ENCODE measurements at regions of chr6 and their contacts with region 1.

Region 1: DNA sequence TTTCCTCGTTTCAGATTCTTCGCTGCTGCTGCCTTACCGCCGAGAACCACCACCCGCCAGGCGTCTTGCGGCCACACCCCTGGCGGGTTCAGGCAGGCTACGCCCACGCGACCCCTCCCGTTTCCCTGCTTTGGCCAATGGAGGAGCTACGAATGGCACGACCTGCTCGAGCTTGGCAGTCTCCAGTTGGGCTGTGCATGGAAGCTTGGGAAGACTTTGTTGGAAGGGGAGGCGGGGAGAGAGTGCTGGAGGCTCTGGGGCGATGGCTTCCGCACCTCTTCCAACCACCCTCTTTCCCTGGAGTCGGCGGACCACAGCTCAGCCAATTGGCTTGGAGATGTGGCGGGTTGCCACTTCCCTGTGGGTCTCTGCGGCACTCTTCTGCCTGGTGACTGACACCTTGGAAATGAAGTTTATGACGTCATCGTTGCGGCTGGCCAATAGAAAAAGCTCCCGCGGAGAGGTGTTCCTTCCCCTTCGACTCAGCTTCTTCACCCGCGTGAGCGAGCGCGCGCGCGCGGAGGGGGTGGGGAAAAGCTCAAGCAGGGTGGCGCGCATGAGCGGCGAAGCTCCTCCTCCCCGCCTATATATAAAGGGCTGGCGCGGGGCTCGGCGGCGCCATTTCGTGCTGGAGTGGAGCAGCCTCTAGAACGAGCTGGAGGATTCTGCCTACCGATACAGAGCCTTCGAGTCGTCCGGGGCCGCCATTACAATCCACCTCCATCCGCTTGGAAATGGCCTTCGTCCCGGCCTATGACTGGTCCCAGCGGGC is 3.4 kb downstream of the BRD2 start:
- DNase-seq: peak; percentile 98
- ATAC-seq: peak; percentile 43
- H3K4me3 ChIP-seq: peak overlapping the region; percentile 90 to 98 (median 95)
- H3K27ac ChIP-seq: peak overlapping the region; percentile 99
- H3K4me1 ChIP-seq: peaks cover 47% of the 10 kb centered on the region
- H3K27me3 ChIP-seq: peaks cover 0 to 4% of the 10 kb centered on the region in 2 experiments; a peak in 1 of 5 replicates
- CTCF ChIP-seq: 0 out of 2 replicates have a peak, but pooled peaks have one; percentile 17
- EP300 ChIP-seq: peak; percentile 17 to 45; a peak in 2 of 4 replicates
- POLR2A ChIP-seq: peak in 1 of 2 experiments; percentile 100; a peak in 2 of 4 replicates
- RAD21 ChIP-seq: peak; percentile 62

Region 2: DNA sequence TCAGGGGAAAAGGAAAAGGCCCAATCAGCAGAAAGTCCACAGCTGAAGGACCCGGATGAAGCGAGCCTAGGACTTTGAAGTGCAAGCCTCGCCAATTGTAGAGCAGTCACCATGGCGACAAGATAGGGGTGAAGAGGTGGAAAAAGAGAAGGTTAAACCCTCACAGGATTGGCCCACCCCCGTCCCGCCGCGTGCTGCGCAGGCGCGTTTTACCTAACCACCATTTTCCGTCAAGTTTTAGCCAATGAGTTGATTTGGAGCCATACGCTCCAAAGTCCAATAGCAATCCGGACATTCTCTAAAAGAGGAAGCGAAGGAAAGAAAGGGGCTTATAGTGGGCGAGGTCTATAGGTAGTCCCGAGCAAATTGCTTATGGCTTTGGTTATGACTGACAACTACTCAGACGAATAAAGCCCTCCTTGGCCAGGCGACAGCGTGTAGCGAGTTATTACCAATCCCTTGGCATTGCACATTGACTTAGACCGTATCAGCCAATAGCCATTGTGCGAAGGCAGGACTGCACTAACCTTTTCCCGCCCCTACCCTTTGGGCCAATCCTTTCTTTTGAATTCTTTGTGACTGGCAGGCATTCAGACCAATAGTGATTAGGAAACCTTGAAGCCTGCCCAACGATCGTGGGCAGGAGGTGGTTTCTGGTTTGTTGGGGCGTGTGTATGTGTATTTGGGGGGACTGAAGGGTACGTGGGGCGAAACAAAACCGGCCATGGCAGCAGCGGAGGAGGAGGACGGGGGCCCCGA is 793.8 kb before region 1 on chr6 and contains the start of gene RNF5:
- CTCF ChIA-PET with region 1: no interaction called
- POLR2A ChIA-PET with region 1: interaction called, 14 read pairs
- in situ Hi-C with region 1: no loop called
- intact Hi-C with region 1: no loop called
- DNase-seq: peak; percentile 100
- ATAC-seq: peak; percentile 90
- H3K4me3 ChIP-seq: peak within 1 kb of the TSS; percentile 96 to 98 (median 98)
- H3K27ac ChIP-seq: peak within 1 kb of the TSS; percentile 97
- H3K4me1 ChIP-seq: peaks cover 54% of the 10 kb centered on the region
- H3K27me3 ChIP-seq: no peaks in the 10 kb centered on the region; a peak in 1 of 5 replicates
- CTCF ChIP-seq: no peak
- EP300 ChIP-seq: peak; percentile 10 to 17; a peak in 1 of 4 replicates
- POLR2A ChIP-seq: peak; percentile 1 to 14; a peak in 1 of 4 replicates
- RAD21 ChIP-seq: no peak
- total RNA-seq, gene RNF5: 98.0 and 107 TPM in 2 replicates

Region 3: DNA sequence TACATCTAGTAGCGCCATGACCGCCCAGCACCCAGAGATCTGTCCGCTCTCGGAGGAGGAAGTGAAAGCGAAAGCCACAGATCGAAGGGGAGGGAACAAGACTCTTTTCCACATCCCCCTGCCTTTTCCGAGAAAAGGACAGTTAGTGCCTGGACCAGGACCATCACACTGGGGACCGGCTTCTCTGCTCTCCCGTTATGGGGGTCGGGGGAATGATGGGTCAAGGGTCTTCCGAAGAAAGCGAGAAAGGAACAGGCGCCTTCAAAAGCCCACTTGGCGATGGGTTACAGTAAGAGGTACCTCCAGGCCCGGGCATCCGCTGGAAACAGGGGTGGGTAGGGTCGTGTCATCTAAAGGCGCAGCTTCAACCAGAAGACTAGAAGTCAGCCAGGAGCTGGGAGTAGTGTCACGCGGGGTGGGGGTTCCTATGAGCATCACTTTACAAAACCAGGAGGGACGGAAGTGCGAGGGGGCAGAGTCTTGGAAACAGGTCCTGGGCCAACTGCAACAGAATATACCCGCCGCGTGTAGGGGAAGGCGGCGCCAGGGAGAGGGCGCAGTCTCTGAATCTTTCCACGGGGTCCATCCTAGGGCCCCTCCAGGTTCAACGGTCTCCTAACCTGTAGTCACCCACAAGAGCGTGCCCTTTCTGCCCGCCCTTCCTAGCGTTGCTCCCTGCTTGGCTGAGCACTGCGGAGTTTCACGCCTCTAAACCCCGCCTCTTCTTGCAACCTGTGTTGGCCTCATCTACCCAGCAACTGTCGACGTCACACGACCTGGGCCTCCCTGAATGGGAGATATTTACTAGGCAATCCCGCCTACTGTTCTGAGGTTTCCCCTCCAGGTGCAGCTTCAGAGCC is 127.6 kb before region 1 on chr6 and contains the start of gene PSMB8:
- CTCF ChIA-PET with region 1: no interaction called
- POLR2A ChIA-PET with region 1: interaction called, 56 read pairs
- in situ Hi-C with region 1: no loop called
- intact Hi-C with region 1: no loop called
- DNase-seq: peak; percentile 96
- ATAC-seq: peak; percentile 97
- H3K4me3 ChIP-seq: peak within 1 kb of the TSS; percentile 73 to 85 (median 75)
- H3K27ac ChIP-seq: peak within 1 kb of the TSS; percentile 20
- H3K4me1 ChIP-seq: peaks cover 16% of the 10 kb centered on the region
- H3K27me3 ChIP-seq: no peaks in the 10 kb centered on the region; a peak in 1 of 5 replicates
- CTCF ChIP-seq: peak; percentile 37
- EP300 ChIP-seq: no peak
- POLR2A ChIP-seq: peak; percentile 57 to 61
- RAD21 ChIP-seq: no peak
- total RNA-seq, gene PSMB8: 64.7 and 74.9 TPM in 2 replicates

Region 4: GRCh38 chr6:32933636-32934085 is 38.1 kb before region 1 on chr6:
- CTCF ChIA-PET with region 1: interaction called, 12 read pairs
- POLR2A ChIA-PET with region 1: interaction called, 7 read pairs
- in situ Hi-C with region 1: no loop called
- intact Hi-C with region 1: no loop called
- DNase-seq: peak; percentile 67
- ATAC-seq: peak; percentile 65
- H3K4me3 ChIP-seq: no peak overlapping the region
- H3K27ac ChIP-seq: no peak overlapping the region
- H3K4me1 ChIP-seq: peaks cover 16% of the 10 kb centered on the region
- H3K27me3 ChIP-seq: peaks cover 2 to 28% of the 10 kb centered on the region in 2 experiments; a peak in 3 of 5 replicates
- CTCF ChIP-seq: peak; percentile 85
- EP300 ChIP-seq: no peak
- POLR2A ChIP-seq: no peak
- RAD21 ChIP-seq: peak; percentile 69

Region 5: GRCh38 chr6:33091957-33092356 is 120.2 kb after region 1 on chr6:
- CTCF ChIA-PET with region 1: no interaction called
- POLR2A ChIA-PET with region 1: no interaction called
- in situ Hi-C with region 1: no loop called
- intact Hi-C with region 1: no loop called
- DNase-seq: peak; percentile 30
- ATAC-seq: peak; percentile 96
- H3K4me3 ChIP-seq: no peak overlapping the region
- H3K27ac ChIP-seq: no peak overlapping the region
- H3K4me1 ChIP-seq: no peaks in the 10 kb centered on the region
- H3K27me3 ChIP-seq: peaks cover 1 to 24% of the 10 kb centered on the region in 2 experiments; a peak in 2 of 5 replicates
- CTCF ChIP-seq: peak; percentile 73
- EP300 ChIP-seq: no peak
- POLR2A ChIP-seq: no peak
- RAD21 ChIP-seq: no peak

Region 6: GRCh38 chr6:33200219-33201146 is 228.7 kb after region 1 on chr6 and contains the starts of genes RXRB and SLC39A7:
- CTCF ChIA-PET with region 1: no interaction called
- POLR2A ChIA-PET with region 1: interaction called, 67 read pairs
- in situ Hi-C with region 1: no loop called
- intact Hi-C with region 1: loop called (anchors 5 kb)
- DNase-seq: peak; percentile 100
- ATAC-seq: peak; percentile 48
- H3K4me3 ChIP-seq: peak within 1 kb of the TSS; percentile 87 to 93 (median 93)
- H3K27ac ChIP-seq: peak within 1 kb of the TSS; percentile 99
- H3K4me1 ChIP-seq: peaks cover 66% of the 10 kb centered on the region
- H3K27me3 ChIP-seq: peaks cover 0 to 4% of the 10 kb centered on the region in 2 experiments; a peak in 1 of 5 replicates
- CTCF ChIP-seq: no peak
- EP300 ChIP-seq: peak in 1 of 2 experiments; percentile 17; a peak in 2 of 4 replicates
- POLR2A ChIP-seq: peak in 1 of 2 experiments; percentile 90; a peak in 2 of 4 replicates
- RAD21 ChIP-seq: peak; percentile 28; the same call in 1 of the 2 replicates
- total RNA-seq, gene RXRB: 21.2 and 26.7 TPM in 2 replicates
- total RNA-seq, gene SLC39A7: 127 and 229 TPM in 2 replicates

Region 7: DNA sequence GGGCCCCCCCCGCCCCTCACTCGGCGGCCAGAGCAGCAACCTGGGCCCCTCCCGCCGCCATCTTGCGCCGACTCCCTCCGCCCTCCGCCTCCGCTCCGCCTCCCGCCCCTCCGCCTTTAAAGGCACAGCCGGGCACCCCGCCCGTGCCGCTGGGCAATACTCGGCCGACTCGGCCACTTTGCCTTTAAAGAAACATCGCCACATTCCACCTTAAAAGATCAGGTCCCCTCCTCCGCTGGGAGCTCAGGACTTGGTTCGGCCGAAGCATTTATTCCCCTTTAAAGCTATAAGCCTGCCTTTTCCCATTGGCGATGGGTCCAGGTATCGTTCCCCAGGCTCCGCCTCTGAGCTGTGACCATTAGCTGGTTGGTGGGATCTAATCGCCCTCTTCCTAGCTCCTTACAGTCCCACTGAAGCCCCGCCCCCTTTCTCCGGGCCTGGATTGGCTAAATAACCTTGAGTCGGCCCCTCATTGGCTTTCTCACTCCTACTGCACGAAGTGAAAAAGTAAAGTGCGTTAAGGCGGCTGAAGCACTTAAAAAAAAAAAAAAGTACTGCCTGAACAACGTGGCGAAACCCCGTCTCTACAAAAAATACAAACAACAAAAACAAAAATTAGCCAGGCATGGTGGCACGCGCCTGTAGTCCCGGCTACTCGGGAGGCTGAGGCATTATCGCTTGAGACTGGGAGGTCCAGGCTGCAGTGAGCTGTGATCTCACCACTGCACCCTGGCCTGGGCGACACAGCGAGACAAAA is 346.1 kb after region 1 on chr6 and contains the start of gene ZBTB22:
- CTCF ChIA-PET with region 1: no interaction called
- POLR2A ChIA-PET with region 1: interaction called, 33 read pairs
- in situ Hi-C with region 1: no loop called
- intact Hi-C with region 1: no loop called
- DNase-seq: peak; percentile 99
- ATAC-seq: peak; percentile 79
- H3K4me3 ChIP-seq: peak within 1 kb of the TSS; percentile 71 to 79 (median 73)
- H3K27ac ChIP-seq: peak within 1 kb of the TSS; percentile 82
- H3K4me1 ChIP-seq: peaks cover 55% of the 10 kb centered on the region
- H3K27me3 ChIP-seq: no peaks in the 10 kb centered on the region; a peak in 2 of 5 replicates
- CTCF ChIP-seq: no peak
- EP300 ChIP-seq: no peak
- POLR2A ChIP-seq: no peak
- RAD21 ChIP-seq: no peak
- total RNA-seq, gene ZBTB22: 6.6 and 8.0 TPM in 2 replicates

Measured in HepG2 (cell line).